Sciatic nerve (tissue), 2 donors: ENCODE measurements at regions of chr10 and their contacts with region 1.

Region 1: GRCh38 chr10:30591249-30591670 is 38.3 kb downstream of the LYZL2 start:
- DNase-seq: no peak
- ATAC-seq: peak; percentile 47

Region 2: GRCh38 chr10:30392564-30392990 is 198.7 kb before region 1 on chr10:
- intact Hi-C with region 1: loop called (anchors 5 kb)
- DNase-seq: peak; percentile 85
- ATAC-seq: peak; percentile 98